Heart left ventricle (tissue), 16 donors: ENCODE measurements at regions of chr13 and their contacts with region 1.

Region 1: DNA sequence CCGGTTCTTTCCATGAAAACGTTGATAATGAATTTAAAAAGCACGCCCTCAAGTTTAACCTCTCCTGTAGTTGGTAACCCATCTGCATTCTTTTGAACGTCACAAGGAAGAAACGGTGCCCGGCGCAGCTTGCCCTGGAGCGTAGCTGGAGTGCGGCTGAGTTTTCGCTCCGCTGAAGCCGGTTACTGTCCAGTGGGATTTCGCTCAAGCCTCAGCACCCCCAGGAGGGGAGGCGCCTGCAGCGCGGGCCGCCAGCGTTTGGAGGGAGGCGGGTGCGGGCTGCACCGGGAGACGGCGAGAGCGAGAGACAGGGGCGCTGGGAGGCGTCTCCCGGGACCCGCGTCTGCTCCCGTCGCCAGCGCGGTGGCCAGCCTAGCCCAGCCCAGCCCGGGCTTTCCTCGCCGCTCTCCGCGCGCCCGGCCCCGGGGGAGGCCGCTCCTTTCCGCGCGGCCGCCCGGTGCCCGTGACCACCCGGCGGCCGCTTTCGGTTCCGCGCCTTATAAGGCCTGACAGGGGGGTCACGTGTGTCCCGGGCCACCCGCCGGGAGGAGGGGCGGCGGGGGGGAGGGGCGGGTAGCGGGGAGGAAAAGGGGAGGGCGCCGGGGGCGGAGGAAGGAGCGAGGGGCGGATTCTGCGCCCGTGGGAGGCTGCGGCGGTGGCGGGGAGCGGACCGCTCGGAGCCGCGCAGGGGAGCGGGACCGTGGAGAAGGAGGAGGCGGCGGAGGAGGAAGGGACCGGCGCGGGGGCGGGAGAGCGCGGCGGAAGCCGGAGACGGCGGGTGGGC is 8.3 kb upstream of the DGKH start:
- DNase-seq: peak; percentile 93 to 96 (median 96)
- ATAC-seq: peak; percentile 83 to 96 (median 92)
- H3K4me3 ChIP-seq: peak overlapping the region; percentile 68 to 97 (median 90)
- H3K27ac ChIP-seq: peak overlapping the region; percentile 93 to 100 (median 98)
- H3K4me1 ChIP-seq: peaks cover 0 to 22% (median 10%) of the 10 kb centered on the region in 12 donors
- H3K27me3 ChIP-seq: no peaks in the 10 kb centered on the region
- CTCF ChIP-seq: peak in 3 of 12 donors; percentile 9 to 16 (median 11)
- POLR2A ChIP-seq: peak; percentile 48 to 98

Region 2: GRCh38 chr13:41668130-41668757 is 371.9 kb before region 1 on chr13:
- intact Hi-C with region 1: loop called in 6 of 10 experiments (anchors 1 to 10 kb)
- DNase-seq: peak in 4 of 5 donors; percentile 44 to 66 (median 56)
- ATAC-seq: peak; percentile 57 to 98 (median 96)
- H3K4me3 ChIP-seq: no peak overlapping the region
- H3K27ac ChIP-seq: no peak overlapping the region
- H3K4me1 ChIP-seq: peaks cover 0 to 7% (median 1%) of the 10 kb centered on the region in 12 donors
- H3K27me3 ChIP-seq: no peaks in the 10 kb centered on the region
- CTCF ChIP-seq: peak; percentile 64 to 85 (median 79)
- POLR2A ChIP-seq: no peak

Region 3: DNA sequence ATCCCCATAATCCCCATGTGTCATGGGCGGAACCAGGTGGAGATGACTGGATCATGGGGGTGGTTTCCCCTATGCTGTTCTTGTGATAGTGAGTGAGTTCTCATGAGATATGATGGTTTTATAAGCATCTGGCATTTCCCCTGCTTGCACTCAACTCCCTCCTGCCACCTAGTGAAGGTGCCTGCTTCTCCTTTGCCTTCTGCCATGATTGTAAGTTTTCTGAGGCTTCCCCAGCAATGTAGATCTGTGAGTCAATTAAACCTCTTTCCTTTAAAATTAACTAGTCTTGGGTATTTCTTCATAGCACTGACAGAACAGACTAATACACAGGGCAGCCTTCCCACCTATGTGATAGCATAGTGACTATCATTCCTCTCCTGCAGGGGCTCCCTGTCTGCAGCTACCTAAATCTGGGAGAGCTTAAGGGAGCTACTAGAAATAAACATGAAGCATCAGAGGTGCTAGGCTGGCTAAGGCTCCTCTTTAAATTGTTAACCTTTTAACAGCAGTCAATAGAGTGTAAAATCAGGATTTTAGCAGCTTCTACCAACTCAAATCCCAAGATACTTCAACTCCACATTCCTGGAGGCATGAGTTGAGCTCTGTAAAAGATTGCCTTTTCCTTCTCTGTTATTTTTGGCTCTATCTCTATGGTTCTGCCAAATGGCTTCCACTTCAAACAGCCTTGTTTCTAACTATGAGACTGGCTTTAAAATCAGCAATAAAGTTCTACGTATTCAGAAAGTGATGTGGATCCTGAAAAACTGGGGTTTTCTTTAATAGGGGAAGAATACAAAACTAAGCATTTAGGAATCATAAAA is 191.5 kb before region 1 on chr13:
- intact Hi-C with region 1: loop called in 1 of 10 experiments (anchors 10 kb)
- DNase-seq: no peak
- ATAC-seq: peak; percentile 39 to 74 (median 71)
- H3K4me3 ChIP-seq: no peak overlapping the region
- H3K27ac ChIP-seq: peak overlapping the region in 7 of 12 donors; percentile 4 to 56 (median 24)
- H3K4me1 ChIP-seq: peaks cover 0 to 19% (median 5%) of the 10 kb centered on the region in 12 donors
- H3K27me3 ChIP-seq: no peaks in the 10 kb centered on the region
- CTCF ChIP-seq: peak in 6 of 12 donors; percentile 19 to 46 (median 32)
- POLR2A ChIP-seq: no peak

Region 4: GRCh38 chr13:41916173-41916954 is 123.8 kb before region 1 on chr13:
- intact Hi-C with region 1: loop called in 1 of 10 experiments (anchors 5 kb)
- DNase-seq: no peak
- ATAC-seq: peak in 3 of 4 donors; percentile 39 to 58 (median 50)
- H3K4me3 ChIP-seq: peak overlapping the region in 3 of 12 donors; percentile 8 to 12 (median 10)
- H3K27ac ChIP-seq: peak overlapping the region in 11 of 12 donors; percentile 10 to 63 (median 55)
- H3K4me1 ChIP-seq: peaks cover 3 to 68% (median 48%) of the 10 kb centered on the region in 12 donors
- H3K27me3 ChIP-seq: no peaks in the 10 kb centered on the region
- CTCF ChIP-seq: no peak
- POLR2A ChIP-seq: no peak

Region 5: DNA sequence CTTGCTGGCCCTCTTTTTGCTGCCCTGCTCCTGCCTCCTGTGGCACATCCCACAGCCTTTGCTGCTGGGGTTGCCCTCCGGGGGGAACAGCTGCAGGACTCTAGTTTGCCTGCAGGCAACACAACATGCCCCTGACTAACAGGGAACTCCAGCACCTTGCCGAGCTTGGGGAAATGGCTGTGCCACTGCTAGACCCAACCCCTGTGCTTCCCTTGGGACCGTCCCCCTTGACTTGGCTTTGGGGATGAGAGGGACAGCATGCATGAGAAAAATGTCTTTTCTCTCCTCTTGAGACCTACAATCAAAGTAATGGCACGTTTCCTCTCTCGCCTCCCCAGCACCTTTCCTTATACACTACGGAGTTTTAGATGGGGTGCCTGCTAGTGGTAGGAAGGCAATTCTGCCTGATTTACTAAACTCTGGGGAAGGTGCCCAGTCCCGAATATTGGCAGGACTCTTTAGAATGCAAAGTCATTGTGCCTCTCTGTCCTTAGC is 66.8 kb before region 1 on chr13:
- intact Hi-C with region 1: loop called in 3 of 10 experiments (anchors 5 to 10 kb)
- DNase-seq: peak in 4 of 5 donors; percentile 10 to 33 (median 28)
- ATAC-seq: peak; percentile 73 to 91 (median 83)
- H3K4me3 ChIP-seq: no peak overlapping the region
- H3K27ac ChIP-seq: peak overlapping the region in 1 of 12 donors; percentile 26
- H3K4me1 ChIP-seq: peaks cover 0 to 6% (median 0%) of the 10 kb centered on the region in 12 donors
- H3K27me3 ChIP-seq: no peaks in the 10 kb centered on the region
- CTCF ChIP-seq: peak in 8 of 12 donors; percentile 6 to 48 (median 30)
- POLR2A ChIP-seq: no peak

Region 6: DNA sequence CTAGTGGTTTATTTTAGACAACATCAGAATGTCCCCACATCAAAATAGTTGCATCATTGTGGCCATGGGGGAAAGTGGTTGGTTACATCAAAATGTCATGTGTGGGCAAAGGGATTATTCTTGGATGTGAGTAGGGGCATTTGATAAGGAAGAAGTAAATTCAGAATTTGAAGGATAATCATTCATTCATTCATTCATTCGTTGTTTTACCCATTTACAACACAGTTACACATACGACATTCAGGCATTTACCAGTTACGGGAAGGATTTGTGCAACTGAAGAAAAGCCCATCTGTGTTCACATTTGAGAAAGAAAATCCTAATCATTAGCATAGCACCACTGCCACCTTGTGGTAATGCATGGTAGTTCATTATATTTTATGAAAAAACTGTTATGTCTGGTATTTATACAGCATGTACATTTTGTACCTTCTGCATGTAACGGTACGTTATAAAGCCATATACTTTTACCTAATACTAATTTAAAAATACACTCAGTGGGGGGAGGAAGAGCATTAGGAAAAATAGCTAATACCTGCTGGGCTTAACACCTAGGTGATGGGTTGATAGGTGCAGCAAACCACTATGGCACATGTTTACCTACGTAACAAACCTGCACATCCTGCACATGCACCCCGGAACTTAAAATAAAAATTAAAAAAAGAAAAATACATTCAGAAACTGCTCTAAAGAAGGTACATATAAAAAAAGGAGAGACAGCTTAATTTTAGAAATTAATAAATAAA is 70.4 kb after region 1 on chr13:
- intact Hi-C with region 1: loop called in 8 of 10 experiments (anchors 5 to 10 kb)
- DNase-seq: no peak
- ATAC-seq: peak in 3 of 4 donors; percentile 53 to 59 (median 58)
- H3K4me3 ChIP-seq: no peak overlapping the region
- H3K27ac ChIP-seq: no peak overlapping the region
- H3K4me1 ChIP-seq: peaks cover 0 to 42% (median 18%) of the 10 kb centered on the region in 12 donors
- H3K27me3 ChIP-seq: no peaks in the 10 kb centered on the region
- CTCF ChIP-seq: peak; percentile 76 to 94 (median 86)
- POLR2A ChIP-seq: no peak

Region 7: GRCh38 chr13:42440191-42440550 is 400.0 kb after region 1 on chr13:
- intact Hi-C with region 1: no loop called
- DNase-seq: no peak
- ATAC-seq: no peak
- H3K4me3 ChIP-seq: no peak overlapping the region
- H3K27ac ChIP-seq: no peak overlapping the region
- H3K4me1 ChIP-seq: no peaks in the 10 kb centered on the region
- H3K27me3 ChIP-seq: peaks cover 0 to 3% (median 0%) of the 10 kb centered on the region in 9 donors
- CTCF ChIP-seq: no peak
- POLR2A ChIP-seq: no peak